GM12878 (cell line): ENCODE measurements at regions of chr1 and their contacts with region 1.

Region 1: DNA sequence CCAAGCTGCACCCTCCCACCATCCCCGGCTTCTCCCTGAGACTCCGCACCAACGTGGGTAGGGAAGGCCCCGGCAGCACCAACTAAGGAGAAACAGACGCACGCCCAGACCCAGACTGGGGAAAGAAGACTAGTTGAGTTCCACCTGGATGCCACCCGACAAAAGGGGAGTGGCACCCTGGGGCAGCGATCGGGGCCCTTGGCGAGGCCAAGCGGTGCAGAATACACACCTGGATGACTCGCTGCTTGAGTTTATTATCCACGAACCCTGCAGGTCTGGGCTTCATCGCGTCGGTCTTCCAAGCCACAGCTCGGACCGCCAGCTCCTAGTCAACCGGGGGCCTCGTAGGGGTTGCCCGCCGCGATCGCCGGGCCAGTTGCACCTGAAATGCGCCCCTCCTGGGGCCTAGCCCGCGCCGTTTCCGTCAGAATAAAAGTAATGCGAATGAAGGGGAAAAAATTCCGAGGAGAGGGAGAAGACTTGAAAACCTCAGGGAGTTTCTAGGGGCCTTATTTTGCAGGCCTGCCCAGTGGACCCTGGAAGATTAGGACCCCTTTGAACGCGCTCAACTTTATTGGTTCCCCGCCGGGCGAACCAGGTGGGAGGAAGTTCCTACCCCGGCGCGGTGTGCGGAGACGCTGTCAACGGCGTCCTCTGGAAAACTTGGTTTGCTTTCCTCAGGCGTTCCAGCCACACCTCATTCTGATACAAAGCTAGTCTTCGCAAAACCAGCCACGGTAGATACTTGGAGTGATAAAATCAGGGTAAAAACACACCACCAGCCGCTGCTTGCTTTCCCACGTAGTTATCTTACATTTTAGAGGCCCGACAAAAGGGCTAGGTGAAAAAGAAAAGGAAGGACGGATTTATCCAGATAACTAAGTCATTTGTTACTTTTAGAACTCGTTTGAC is at the start of gene NVL:
- DNase-seq: peak; percentile 48
- ATAC-seq: peak; percentile 85
- H3K4me3 ChIP-seq: peak within 1 kb of the TSS; percentile 97
- H3K27ac ChIP-seq: peak within 1 kb of the TSS; percentile 99
- H3K4me1 ChIP-seq: peaks cover 7% of the 10 kb centered on the region
- H3K27me3 ChIP-seq: no peaks in the 10 kb centered on the region
- CTCF ChIP-seq: no peak
- EP300 ChIP-seq: no peak
- POLR2A ChIP-seq: peak; percentile 85
- RAD21 ChIP-seq: no peak
- polyA plus RNA-seq, gene NVL: 20.3 to 30.4 TPM

Region 2: GRCh38 chr1:223712194-223712849 is 617.8 kb before region 1 on chr1 and contains the start of gene CAPN2:
- CTCF ChIA-PET with region 1: no interaction called
- POLR2A ChIA-PET with region 1: no interaction called
- RAD21 ChIA-PET with region 1: no interaction called
- SMC1A ChIA-PET with region 1: no interaction called
- in situ Hi-C with region 1: no loop called
- intact Hi-C with region 1: loop called (anchors 5 kb)
- DNase-seq: no peak
- ATAC-seq: peak; percentile 81
- H3K4me3 ChIP-seq: peak within 1 kb of the TSS; percentile 72
- H3K27ac ChIP-seq: 0 out of 2 replicates have a peak within 1 kb of the TSS, but pooled peaks have one; percentile 44
- H3K4me1 ChIP-seq: peaks cover 28% of the 10 kb centered on the region
- H3K27me3 ChIP-seq: no peaks in the 10 kb centered on the region
- CTCF ChIP-seq: peak; percentile 46 to 71 (median 63); a peak in 5 of 6 replicates
- EP300 ChIP-seq: no peak
- POLR2A ChIP-seq: no peak
- RAD21 ChIP-seq: peak; percentile 45
- polyA plus RNA-seq, gene CAPN2: 6.0 to 8.2 TPM

Region 3: GRCh38 chr1:224052772-224053171 is 277.3 kb before region 1 on chr1:
- CTCF ChIA-PET with region 1: interaction called, 15 read pairs
- POLR2A ChIA-PET with region 1: no interaction called
- RAD21 ChIA-PET with region 1: no interaction called
- SMC1A ChIA-PET with region 1: interaction called, 5 read pairs
- in situ Hi-C with region 1: no loop called
- intact Hi-C with region 1: no loop called
- DNase-seq: no peak
- ATAC-seq: no peak
- H3K4me3 ChIP-seq: no peak overlapping the region
- H3K27ac ChIP-seq: no peak overlapping the region
- H3K4me1 ChIP-seq: no peaks in the 10 kb centered on the region
- H3K27me3 ChIP-seq: no peaks in the 10 kb centered on the region
- CTCF ChIP-seq: no peak
- EP300 ChIP-seq: no peak
- POLR2A ChIP-seq: no peak
- RAD21 ChIP-seq: no peak

Region 4: DNA sequence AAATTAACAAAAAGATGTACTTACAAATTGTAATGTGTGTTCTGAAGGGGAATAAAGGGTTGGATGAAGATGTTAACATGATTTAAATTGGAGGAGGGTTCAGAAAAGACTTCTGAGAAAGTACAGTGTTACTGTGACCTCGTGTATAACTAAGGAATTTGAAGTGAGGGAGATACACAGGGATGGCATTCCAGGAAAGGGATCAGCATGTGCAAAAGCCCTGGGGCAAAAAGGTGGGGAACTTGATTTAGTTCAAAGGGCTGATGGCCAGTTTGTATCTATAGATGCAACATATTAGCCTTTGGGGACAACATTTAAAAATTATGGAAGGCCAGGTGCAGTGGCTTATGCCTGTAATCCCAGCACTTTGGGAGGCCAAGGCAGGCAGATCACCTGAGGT is 180.4 kb before region 1 on chr1:
- CTCF ChIA-PET with region 1: interaction called, 10 read pairs
- POLR2A ChIA-PET with region 1: no interaction called
- RAD21 ChIA-PET with region 1: no interaction called
- SMC1A ChIA-PET with region 1: no interaction called
- in situ Hi-C with region 1: no loop called
- intact Hi-C with region 1: no loop called
- DNase-seq: no peak
- ATAC-seq: no peak
- H3K4me3 ChIP-seq: no peak overlapping the region
- H3K27ac ChIP-seq: no peak overlapping the region
- H3K4me1 ChIP-seq: no peaks in the 10 kb centered on the region
- H3K27me3 ChIP-seq: no peaks in the 10 kb centered on the region
- CTCF ChIP-seq: no peak
- EP300 ChIP-seq: no peak
- POLR2A ChIP-seq: no peak
- RAD21 ChIP-seq: no peak

Region 5: GRCh38 chr1:224356685-224357625 is 26.9 kb after region 1 on chr1 and contains the start of gene CNIH4:
- CTCF ChIA-PET with region 1: interaction called, 10 read pairs
- POLR2A ChIA-PET with region 1: no interaction called
- RAD21 ChIA-PET with region 1: interaction called, 14 read pairs
- SMC1A ChIA-PET with region 1: interaction called, 10 read pairs
- in situ Hi-C with region 1: no loop called
- intact Hi-C with region 1: no loop called
- DNase-seq: peak; percentile 79
- ATAC-seq: peak; percentile 98
- H3K4me3 ChIP-seq: peak within 1 kb of the TSS; percentile 85
- H3K27ac ChIP-seq: peak within 1 kb of the TSS; percentile 30; the same call in 1 of the 2 replicates
- H3K4me1 ChIP-seq: no peaks in the 10 kb centered on the region
- H3K27me3 ChIP-seq: no peaks in the 10 kb centered on the region
- CTCF ChIP-seq: no peak
- EP300 ChIP-seq: no peak
- POLR2A ChIP-seq: peak; percentile 95
- RAD21 ChIP-seq: no peak
- polyA plus RNA-seq, gene CNIH4: 134 to 173 TPM

Region 6: DNA sequence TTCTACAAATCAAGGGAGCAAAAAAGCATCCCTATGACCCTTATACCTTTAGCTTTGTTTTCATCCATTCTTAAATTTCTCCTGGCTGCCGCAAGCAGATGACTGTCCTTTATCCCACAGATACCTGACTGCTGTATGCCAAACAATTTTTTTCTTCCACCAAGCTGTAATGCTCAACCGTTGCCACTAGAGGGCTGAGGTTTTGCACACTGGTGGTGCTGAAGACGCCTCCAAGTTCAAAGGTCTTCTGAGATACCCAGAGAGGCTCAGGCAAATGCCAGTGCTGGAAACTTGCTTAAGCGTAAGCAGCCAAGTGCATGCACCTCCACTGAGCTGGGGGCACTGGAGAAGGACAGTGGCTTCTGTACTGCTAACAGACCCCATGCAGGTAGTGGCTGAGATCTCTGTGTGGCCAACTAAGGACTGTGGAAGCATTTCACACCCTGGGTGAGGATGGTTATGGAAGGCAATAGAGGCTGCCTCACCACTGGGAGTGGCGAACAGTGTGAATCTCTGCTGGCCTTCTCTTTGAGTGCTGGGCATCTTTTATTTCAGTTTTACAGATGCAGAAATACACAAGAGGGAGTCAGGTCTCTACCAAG is 314.6 kb after region 1 on chr1:
- CTCF ChIA-PET with region 1: no interaction called
- POLR2A ChIA-PET with region 1: no interaction called
- RAD21 ChIA-PET with region 1: no interaction called
- SMC1A ChIA-PET with region 1: no interaction called
- in situ Hi-C with region 1: no loop called
- intact Hi-C with region 1: no loop called
- DNase-seq: peak; percentile 24
- ATAC-seq: peak; percentile 85
- H3K4me3 ChIP-seq: no peak overlapping the region
- H3K27ac ChIP-seq: no peak overlapping the region
- H3K4me1 ChIP-seq: no peaks in the 10 kb centered on the region
- H3K27me3 ChIP-seq: no peaks in the 10 kb centered on the region; a peak in 1 of 4 replicates
- CTCF ChIP-seq: peak; percentile 84 to 91 (median 90)
- EP300 ChIP-seq: no peak
- POLR2A ChIP-seq: no peak
- RAD21 ChIP-seq: peak; percentile 84